Natural killer cell (primary cell): ENCODE measurements at regions of chr3 and their contacts with region 1.

Region 1: GRCh38 chr3:139389458-139390209 is at the start of gene COPB2:
- DNase-seq: peak; percentile 97 to 99
- ATAC-seq: peak; percentile 90 to 98 (median 96)
- H3K4me3 ChIP-seq: peak within 1 kb of the TSS; percentile 95
- H3K4me3 Mint-ChIP-seq: peak within 1 kb of the TSS; percentile 97
- H3K27ac ChIP-seq: peak within 1 kb of the TSS; percentile 91
- H3K27ac Mint-ChIP-seq: peak within 1 kb of the TSS; percentile 96 to 100
- H3K4me1 ChIP-seq: peaks cover 19% of the 10 kb centered on the region
- H3K4me1 Mint-ChIP-seq: peaks cover 38 to 39% of the 10 kb centered on the region in 2 donors
- H3K27me3 ChIP-seq: no peaks in the 10 kb centered on the region
- H3K27me3 Mint-ChIP-seq: peaks cover 0 to 2% of the 10 kb centered on the region in 2 donors
- CTCF ChIP-seq: no peak
- total RNA-seq, gene COPB2: 34.7 to 50.2 (median 42.4) TPM

Region 2: DNA sequence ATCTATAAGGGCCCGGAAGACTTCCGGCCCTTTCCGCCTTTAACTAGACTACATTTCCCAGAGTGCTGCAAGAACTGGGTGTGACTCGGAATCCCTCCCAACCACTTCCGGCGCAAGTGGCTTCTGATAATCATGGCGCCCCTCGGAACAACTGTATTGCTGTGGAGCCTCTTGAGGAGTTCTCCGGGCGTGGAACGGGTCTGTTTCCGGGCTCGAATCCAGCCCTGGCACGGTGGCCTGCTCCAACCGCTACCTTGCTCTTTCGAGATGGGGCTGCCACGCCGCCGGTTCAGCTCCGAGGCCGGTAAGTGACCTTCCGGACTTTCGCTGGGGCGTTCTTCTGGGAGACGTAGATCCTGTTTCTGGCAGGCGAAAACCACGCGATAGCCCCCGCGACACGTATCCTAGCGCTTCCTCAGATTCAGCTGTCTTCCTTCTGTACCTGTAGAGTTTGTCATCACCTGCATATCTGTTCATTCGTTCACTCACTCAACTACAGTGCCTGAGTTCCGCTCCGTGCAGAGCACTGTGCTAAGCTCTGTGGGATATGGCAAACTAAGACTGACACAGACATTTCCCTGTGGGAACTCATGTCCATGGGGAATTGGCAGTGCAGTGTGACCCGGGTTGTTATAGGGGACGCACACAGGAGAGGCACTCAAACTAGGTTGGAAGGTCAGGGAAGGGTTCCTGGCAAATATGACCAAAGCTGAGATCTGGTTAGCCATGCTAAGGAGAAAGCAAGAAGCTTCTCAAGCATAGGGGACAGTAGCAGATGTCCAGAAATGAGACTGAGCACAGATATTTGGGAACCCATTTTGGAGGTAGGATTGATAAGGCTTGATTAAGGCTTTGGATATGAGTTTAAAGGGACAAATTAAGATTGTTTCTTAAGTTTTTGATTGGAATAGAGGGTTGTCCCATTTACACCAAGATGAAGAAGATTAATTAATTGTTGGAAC is 45.5 kb before region 1 on chr3 and contains the start of gene MRPS22:
- intact Hi-C with region 1: loop called (anchors 1 kb)
- DNase-seq: peak; percentile 70 to 92
- ATAC-seq: peak; percentile 94 to 99 (median 99)
- H3K4me3 ChIP-seq: peak within 1 kb of the TSS; percentile 97
- H3K4me3 Mint-ChIP-seq: no peak within 1 kb of the TSS
- H3K27ac ChIP-seq: peak within 1 kb of the TSS; percentile 82
- H3K27ac Mint-ChIP-seq: peak within 1 kb of the TSS in 1 of 2 donors; percentile 39
- H3K4me1 ChIP-seq: peaks cover 16% of the 10 kb centered on the region
- H3K4me1 Mint-ChIP-seq: peaks cover 0 to 9% of the 10 kb centered on the region in 2 donors
- H3K27me3 ChIP-seq: peaks cover 3% of the 10 kb centered on the region
- H3K27me3 Mint-ChIP-seq: peaks cover 8 to 13% of the 10 kb centered on the region in 2 donors
- CTCF ChIP-seq: no peak
- total RNA-seq, gene MRPS22: 32.4 to 39.1 (median 35.3) TPM